Activated CD4-positive, alpha-beta T cell treated with anti-CD3 and anti-CD28 coated beads for 36 hours (primary cell): ENCODE measurements at regions of chr4 and their contacts with region 1.

Region 1: GRCh38 chr4:48033825-48034413 is 17.3 kb downstream of the NIPAL1 start:
- DNase-seq: peak; percentile 78
- ATAC-seq: peak; percentile 37
- H3K4me3 Mint-ChIP-seq: no peak overlapping the region
- H3K27ac Mint-ChIP-seq: peak overlapping the region; percentile 29
- H3K4me1 Mint-ChIP-seq: peaks cover 46% of the 10 kb centered on the region
- H3K27me3 Mint-ChIP-seq: no peaks in the 10 kb centered on the region

Region 2: GRCh38 chr4:48047421-48047844 is 13.5 kb after region 1 on chr4:
- CTCF ChIA-PET with region 1: interaction called, 105 read pairs
- POLR2A ChIA-PET with region 1: interaction called, 6 read pairs
- intact Hi-C with region 1: loop called (anchors 1 kb)
- DNase-seq: peak; percentile 90
- ATAC-seq: peak; percentile 83
- H3K4me3 Mint-ChIP-seq: peak overlapping the region; percentile 47
- H3K27ac Mint-ChIP-seq: peak overlapping the region; percentile 70
- H3K4me1 Mint-ChIP-seq: peaks cover 60% of the 10 kb centered on the region
- H3K27me3 Mint-ChIP-seq: peaks cover 17% of the 10 kb centered on the region

Region 3: GRCh38 chr4:48074657-48075056 is 40.7 kb after region 1 on chr4:
- CTCF ChIA-PET with region 1: interaction called, 10 read pairs
- POLR2A ChIA-PET with region 1: no interaction called
- intact Hi-C with region 1: no loop called
- DNase-seq: no peak
- ATAC-seq: no peak
- H3K4me3 Mint-ChIP-seq: no peak overlapping the region
- H3K27ac Mint-ChIP-seq: no peak overlapping the region
- H3K4me1 Mint-ChIP-seq: peaks cover 19% of the 10 kb centered on the region
- H3K27me3 Mint-ChIP-seq: no peaks in the 10 kb centered on the region

Region 4: DNA sequence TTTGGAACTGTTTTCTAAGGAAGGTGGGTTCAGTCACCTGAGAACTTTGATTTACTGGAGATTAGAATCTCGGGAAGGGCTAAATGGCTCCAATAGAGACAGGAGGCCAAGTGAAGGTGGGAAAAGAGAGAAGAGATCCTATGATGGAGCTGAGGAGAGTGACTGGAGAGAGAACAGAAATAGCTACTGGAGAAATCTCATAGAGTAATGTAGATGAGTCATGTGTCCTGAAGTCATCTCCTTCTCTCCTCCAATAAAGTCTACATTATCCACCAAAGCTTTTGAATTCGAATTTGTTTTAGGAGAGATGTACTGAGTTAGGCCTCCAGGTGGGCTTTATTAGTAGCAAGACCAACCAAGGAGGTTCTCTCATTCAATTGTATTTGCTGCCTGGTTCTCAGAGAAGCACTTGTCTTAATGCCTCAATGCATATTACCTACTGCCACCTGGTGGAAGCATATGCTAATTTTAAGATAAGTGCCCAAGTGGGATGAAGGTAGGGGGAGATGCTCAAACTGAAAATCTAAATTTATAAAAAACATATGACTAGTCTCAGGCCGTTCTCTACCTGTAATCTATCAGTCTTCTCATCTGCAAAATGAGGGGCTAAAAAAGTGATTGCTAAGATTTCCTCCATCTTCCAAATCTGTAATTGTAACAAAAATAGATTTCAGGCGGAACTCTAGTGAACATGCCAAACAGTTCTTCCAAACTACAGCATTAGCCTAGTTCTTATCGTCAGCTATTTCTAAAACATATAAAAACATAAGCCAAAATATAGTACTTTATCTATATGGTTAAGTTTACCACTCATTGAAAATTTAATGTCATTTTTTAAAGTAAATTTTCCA is 75.7 kb after region 1 on chr4:
- CTCF ChIA-PET with region 1: interaction called, 20 read pairs
- POLR2A ChIA-PET with region 1: no interaction called
- intact Hi-C with region 1: no loop called
- DNase-seq: no peak
- ATAC-seq: peak; percentile 86
- H3K4me3 Mint-ChIP-seq: no peak overlapping the region
- H3K27ac Mint-ChIP-seq: peak overlapping the region; percentile 65
- H3K4me1 Mint-ChIP-seq: peaks cover 61% of the 10 kb centered on the region
- H3K27me3 Mint-ChIP-seq: no peaks in the 10 kb centered on the region